ENCODE measurements at regions of chr2 and their contacts with region 1.

Region 1: DNA sequence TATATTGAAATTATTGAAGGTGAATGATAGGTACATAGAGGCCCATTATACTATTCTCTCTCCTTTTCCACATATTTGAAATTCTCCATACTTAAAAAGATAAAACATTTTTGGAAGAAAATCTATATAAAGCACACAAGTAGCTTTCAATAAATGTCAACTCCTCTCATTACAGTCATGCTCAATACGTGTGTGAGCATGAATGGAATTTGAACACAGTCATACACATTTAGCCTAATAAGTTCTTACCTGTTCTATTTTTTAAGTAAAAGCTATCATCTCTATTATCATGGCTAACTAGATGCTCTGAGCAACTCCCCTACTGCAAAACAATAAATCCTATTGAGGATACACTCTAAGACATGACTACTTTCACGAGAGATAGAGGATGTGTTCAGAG is 41.9 kb upstream of the SPATS2L start:
- DNase-seq: peak; percentile 57
- H3K4me3 ChIP-seq: no peak overlapping the region
- H3K27ac ChIP-seq: no peak overlapping the region
- H3K4me1 ChIP-seq: peaks cover 10% of the 10 kb centered on the region
- H3K27me3 ChIP-seq: no peaks in the 10 kb centered on the region
- CTCF ChIP-seq: no peak

Region 2: DNA sequence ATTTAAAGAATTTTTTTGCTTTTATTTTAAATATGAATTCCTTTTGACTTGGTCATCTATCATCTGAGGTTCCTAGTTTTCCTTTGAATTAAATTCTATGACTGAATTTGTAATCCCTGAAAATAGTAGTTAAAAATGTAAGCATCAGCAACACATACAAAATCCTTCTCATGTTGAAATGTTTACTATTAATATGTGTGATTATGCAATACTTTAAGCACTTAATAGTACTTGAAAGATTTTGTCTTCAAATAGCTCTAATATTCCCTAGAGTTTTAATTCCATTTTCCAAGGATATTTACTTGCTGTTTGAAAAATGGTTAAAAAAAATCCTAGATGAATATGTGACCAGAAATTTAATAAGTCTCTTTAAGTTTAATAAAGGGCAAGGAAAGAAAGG is 15.2 kb after region 1 on chr2:
- CTCF ChIA-PET with region 1: no interaction called
- dilution Hi-C with region 1: no loop called
- in situ Hi-C with region 1: no loop called
- intact Hi-C with region 1: loop called (anchors 2 kb)
- DNase-seq: no peak
- H3K4me3 ChIP-seq: no peak overlapping the region
- H3K27ac ChIP-seq: no peak overlapping the region
- H3K4me1 ChIP-seq: peaks cover 27% of the 10 kb centered on the region
- H3K27me3 ChIP-seq: no peaks in the 10 kb centered on the region
- CTCF ChIP-seq: no peak

Measured in mammary epithelial cell (primary cell).